ENCODE measurements at regions of chr2 and their contacts with region 1.

Region 1: DNA sequence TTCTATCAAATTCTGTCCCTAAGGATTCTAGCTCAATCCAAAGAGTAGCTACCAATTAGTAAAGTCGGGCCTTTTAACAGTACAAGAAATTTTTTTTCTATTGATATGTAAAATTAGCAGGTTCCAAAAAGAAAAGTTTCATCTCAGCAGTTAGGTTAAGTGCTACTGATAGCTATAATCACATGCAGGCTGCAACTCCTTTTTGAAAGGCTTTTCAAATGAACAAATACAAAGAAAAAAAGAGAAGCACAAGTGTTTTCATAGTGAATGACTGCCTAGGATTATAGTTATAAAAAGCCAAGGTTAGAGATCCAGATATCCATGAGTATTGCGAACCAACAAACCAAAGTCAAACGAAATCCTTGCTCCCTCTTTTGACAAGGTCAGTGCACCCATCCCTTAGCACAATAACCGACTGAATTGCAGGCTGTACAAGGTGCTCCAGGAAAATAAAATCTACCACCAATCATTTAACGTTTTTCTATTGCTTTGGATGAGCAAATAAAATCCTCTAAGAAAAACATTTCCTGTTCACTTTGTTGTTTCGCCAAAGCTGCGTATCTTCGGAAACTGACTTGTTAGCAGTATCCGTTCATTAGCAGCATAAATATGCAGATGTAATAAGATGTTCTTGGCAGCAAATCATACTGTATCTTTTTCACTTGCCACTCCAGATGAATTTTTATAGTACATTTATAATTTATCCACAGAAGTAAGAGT is 100.2 kb downstream of the SRBD1 start:
- DNase-seq: no peak
- H3K4me3 ChIP-seq: no peak overlapping the region
- H3K27ac ChIP-seq: no peak overlapping the region
- H3K4me1 ChIP-seq: no peaks in the 10 kb centered on the region
- H3K27me3 ChIP-seq: no peaks in the 10 kb centered on the region
- CTCF ChIP-seq: no peak
- POLR2A ChIP-seq: no peak

Region 2: GRCh38 chr2:44886414-44886813 is 624.4 kb before region 1 on chr2:
- intact Hi-C with region 1: loop called (anchors 5 kb)
- DNase-seq: no peak
- H3K4me3 ChIP-seq: no peak overlapping the region
- H3K27ac ChIP-seq: no peak overlapping the region
- H3K4me1 ChIP-seq: no peaks in the 10 kb centered on the region
- H3K27me3 ChIP-seq: peaks cover 0 to 6% of the 10 kb centered on the region in 2 donors
- CTCF ChIP-seq: no peak
- POLR2A ChIP-seq: no peak

Region 3: DNA sequence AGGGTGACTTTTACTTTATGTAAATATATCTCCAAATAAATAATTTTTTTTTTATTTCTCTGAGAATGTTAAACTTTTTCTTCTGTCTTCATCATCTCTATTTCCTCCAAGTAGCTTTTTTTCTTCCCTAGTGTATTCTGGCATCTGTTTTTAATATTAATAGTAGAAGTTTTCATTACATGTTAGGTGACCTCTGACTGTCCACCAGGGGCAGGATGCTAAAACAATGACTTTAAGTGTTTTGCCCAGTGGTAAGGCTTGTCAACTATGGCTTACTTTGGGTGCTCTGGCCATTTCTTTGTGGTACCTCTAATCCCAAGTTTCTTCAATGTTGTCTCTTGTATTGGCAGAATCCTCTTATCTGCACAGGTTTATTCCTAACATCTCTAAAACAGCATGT is 26.9 kb before region 1 on chr2:
- intact Hi-C with region 1: no loop called
- DNase-seq: no peak
- H3K4me3 ChIP-seq: no peak overlapping the region
- H3K27ac ChIP-seq: no peak overlapping the region
- H3K4me1 ChIP-seq: no peaks in the 10 kb centered on the region
- H3K27me3 ChIP-seq: no peaks in the 10 kb centered on the region
- CTCF ChIP-seq: no peak
- POLR2A ChIP-seq: no peak